Lower leg skin (tissue), 4 donors: ENCODE measurements at regions of chr18 and their contacts with region 1.

Region 1: DNA sequence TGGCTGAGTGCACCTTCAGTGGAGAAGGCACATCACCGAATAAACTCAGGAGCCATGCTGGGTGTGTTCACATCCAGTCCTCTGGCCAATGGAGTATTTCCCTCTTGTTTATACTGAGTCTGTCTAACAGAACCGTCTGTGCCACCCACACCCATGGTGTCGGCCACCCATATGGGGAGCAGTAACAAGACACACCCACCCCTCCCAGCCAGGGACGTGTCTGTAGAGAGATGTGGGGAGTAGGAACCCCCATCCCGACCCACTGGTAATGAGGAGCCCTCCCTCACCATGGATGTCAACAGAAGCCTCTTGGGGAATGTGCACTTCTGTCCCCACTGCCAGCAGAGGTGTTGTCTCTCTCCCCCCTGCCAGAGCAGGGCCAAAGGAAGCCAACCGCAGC is 37.1 kb downstream of the KCNG2 start:
- DNase-seq: no peak
- H3K4me3 ChIP-seq: no peak overlapping the region
- CTCF ChIP-seq: no peak
- POLR2A ChIP-seq: no peak

Region 2: GRCh38 chr18:78965917-78966792 is 868.7 kb before region 1 on chr18:
- intact Hi-C with region 1: loop called (anchors 5 kb)
- DNase-seq: no peak
- H3K4me3 ChIP-seq: no peak overlapping the region
- CTCF ChIP-seq: no peak
- POLR2A ChIP-seq: no peak

Region 3: GRCh38 chr18:79749251-79750191 is 85.3 kb before region 1 on chr18:
- intact Hi-C with region 1: no loop called
- DNase-seq: peak in 1 of 2 donors; percentile 73
- H3K4me3 ChIP-seq: no peak overlapping the region
- CTCF ChIP-seq: no peak
- POLR2A ChIP-seq: no peak

Region 4: DNA sequence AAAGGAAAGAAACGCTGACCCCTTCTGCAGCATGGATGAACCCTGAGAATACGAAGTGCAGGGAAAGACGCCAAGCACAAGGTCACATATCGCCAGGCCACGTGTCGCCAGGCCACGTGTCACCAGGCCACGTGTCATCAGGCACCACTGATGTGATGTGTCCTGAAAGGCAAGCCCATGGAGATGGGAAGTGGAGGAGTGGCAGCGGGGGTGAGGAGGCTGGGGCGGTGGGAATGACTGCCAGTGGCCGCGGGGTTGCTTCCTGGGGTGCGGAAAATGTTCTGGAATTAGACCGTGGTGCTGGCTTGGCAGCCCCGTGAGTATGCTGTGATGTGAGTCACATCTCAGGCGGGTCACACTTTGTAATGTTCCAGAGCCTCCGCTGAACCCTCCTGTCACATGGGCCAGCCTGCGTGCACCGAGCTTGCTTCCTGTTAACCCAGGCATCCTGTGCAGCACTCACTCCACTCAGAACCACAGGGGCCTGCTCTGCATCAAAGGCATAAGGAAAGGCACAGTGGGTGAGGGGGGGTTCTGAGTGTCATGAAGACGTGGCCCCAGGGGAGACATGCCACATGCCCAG is 77.7 kb after region 1 on chr18:
- intact Hi-C with region 1: no loop called
- DNase-seq: peak in 1 of 2 donors; percentile 84
- H3K4me3 ChIP-seq: no peak overlapping the region
- CTCF ChIP-seq: no peak
- POLR2A ChIP-seq: no peak